Dorsolateral prefrontal cortex (tissue), 120 donors: ENCODE measurements at regions of chr9 and their contacts with region 1.

Region 1: DNA sequence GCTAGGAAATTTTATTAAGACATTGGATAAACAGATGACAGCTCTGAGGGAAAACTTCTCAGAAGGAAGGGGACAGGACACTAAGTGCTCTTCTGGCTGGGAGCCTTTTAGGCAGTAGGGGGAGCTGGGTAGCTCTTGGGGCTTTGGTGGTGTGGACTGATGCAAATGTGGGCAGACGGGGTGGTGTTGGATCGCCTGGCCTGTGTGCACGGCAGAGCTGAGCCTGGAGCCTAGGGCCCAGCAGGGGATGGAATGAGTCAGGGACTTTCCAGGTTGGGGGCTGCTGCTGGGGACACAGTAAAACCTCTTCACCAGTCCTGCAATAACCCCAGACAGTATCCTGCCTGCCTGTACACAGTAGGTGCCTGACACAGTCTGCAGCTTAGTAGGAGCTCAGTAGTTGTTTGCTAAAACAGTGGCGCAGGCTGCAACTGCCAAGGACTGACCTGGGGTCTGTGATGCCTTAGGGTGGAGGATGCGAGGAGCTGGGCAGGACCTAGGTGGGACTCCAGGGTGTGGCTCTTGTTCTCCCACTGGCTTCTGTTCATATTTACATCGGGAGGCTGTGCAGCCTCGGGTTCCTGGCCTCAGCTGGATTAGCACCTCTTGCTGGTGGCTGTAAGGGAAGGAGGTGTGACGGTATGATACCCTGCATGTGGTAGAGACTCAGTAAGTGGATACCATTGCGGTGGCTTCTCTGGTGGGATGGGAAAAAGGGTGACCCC is 83.8 kb downstream of the DAB2IP start:
- DNase-seq: no peak
- H3K4me3 ChIP-seq: peak overlapping the region in 9 of 59 donors; percentile 32 to 63 (median 46)
- H3K27ac ChIP-seq: peak overlapping the region in 41 of 59 donors; percentile 6 to 86 (median 69)
- H3K27me3 ChIP-seq: no peaks in the 10 kb centered on the region
- CTCF ChIP-seq: peak in 36 of 56 donors; percentile 6 to 53 (median 28)

Region 2: GRCh38 chr9:121640076-121640475 is 95.2 kb before region 1 on chr9:
- intact Hi-C with region 1: loop called in 1 of 2 experiments (anchors 5 kb)
- DNase-seq: peak in 9 of 10 donors; percentile 39 to 76 (median 63)
- H3K4me3 ChIP-seq: no peak overlapping the region
- H3K27ac ChIP-seq: peak overlapping the region in 58 of 59 donors; percentile 29 to 98 (median 91)
- H3K27me3 ChIP-seq: no peaks in the 10 kb centered on the region
- CTCF ChIP-seq: peak in 53 of 56 donors; percentile 36 to 76 (median 63)